Activated CD4-positive, alpha-beta T cell treated with anti-CD3 and anti-CD28 coated beads, Interleukin-2, amount 10 ng/mL, durations not matched to agents 24 days and 14 days (primary cell): ENCODE measurements at regions of chr20 and their contacts with region 1.

Region 1: GRCh38 chr20:5674176-5674660 is 76.0 kb upstream of the SHLD1 start:
- DNase-seq: peak; percentile 58
- H3K4me3 Mint-ChIP-seq: peak overlapping the region; percentile 19
- H3K27ac Mint-ChIP-seq: peak overlapping the region; percentile 79
- H3K4me1 Mint-ChIP-seq: peaks cover 7% of the 10 kb centered on the region
- H3K27me3 Mint-ChIP-seq: no peaks in the 10 kb centered on the region

Region 2: DNA sequence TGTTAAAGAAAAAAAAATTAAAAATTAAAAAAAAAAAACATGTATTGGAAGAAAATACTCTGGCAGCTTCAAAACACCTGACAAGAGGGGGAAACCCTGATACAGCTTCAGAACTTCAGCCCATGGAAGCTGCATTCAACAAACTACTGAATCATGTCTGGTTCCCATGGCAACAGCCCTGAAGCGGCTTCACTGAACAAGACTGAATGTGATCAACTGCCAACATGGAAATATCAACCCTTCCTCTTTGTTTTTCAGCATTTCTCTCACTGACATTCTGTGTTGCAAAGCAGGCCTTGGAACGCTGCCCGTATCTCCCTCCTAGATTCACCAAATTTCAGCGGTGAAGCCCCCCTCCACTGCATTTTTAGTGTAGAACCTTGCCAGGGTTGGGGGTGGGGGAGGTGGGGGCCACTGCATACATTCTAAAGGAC is 15.3 kb before region 1 on chr20:
- intact Hi-C with region 1: loop called (anchors 1 kb)
- DNase-seq: peak; percentile 64
- H3K4me3 Mint-ChIP-seq: no peak overlapping the region
- H3K27ac Mint-ChIP-seq: peak overlapping the region; percentile 67
- H3K4me1 Mint-ChIP-seq: peaks cover 7% of the 10 kb centered on the region
- H3K27me3 Mint-ChIP-seq: no peaks in the 10 kb centered on the region

Region 3: DNA sequence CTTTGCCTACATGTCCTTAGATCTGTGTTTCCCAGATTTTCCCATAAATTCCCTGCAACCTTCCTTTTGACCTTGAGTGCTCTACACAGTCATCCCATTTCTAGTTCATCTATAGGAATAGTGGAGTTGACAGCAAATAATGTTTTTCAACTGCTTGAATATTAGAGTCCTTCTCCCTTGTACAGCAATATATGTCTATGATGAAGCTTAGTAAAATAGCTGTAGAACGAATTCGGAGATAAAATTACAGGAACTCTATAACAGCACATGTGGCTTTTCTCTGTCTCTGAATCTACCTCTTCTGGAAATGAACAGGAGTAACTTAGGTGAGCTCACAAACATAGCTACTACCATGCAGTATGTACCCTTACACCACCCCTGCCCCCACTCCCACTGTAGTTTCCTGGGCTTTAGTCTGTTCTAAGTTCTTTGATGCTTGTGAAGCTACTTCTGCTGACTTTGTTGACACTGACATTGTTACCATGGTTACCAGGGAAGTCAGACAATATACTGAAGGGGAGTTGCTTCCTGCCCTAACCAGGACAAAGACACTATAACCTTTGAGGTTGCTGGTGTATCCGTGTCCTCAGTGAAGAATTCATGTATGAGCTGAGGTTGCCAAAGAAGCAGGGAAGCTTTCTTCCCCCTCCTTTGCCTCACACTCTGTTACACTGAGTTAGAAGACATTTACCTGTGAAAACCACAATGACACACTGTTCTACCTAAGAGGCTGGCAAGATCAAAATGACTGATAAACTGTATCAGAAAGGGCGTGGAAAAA is 40.2 kb after region 1 on chr20:
- intact Hi-C with region 1: loop called (anchors 2 kb)
- DNase-seq: peak; percentile 90
- H3K4me3 Mint-ChIP-seq: peak overlapping the region; percentile 8
- H3K27ac Mint-ChIP-seq: peak overlapping the region; percentile 80
- H3K4me1 Mint-ChIP-seq: peaks cover 18% of the 10 kb centered on the region
- H3K27me3 Mint-ChIP-seq: peaks cover 2% of the 10 kb centered on the region

Region 4: GRCh38 chr20:5749952-5750779 is 75.9 kb after region 1 on chr20 and contains the start of gene SHLD1:
- intact Hi-C with region 1: loop called (anchors 5 kb)
- DNase-seq: peak; percentile 94
- H3K4me3 Mint-ChIP-seq: peak within 1 kb of the TSS; percentile 98
- H3K27ac Mint-ChIP-seq: peak within 1 kb of the TSS; percentile 98
- H3K4me1 Mint-ChIP-seq: peaks cover 14% of the 10 kb centered on the region
- H3K27me3 Mint-ChIP-seq: no peaks in the 10 kb centered on the region
- total RNA-seq, gene SHLD1: 8.6 and 10.7 TPM in 2 replicates